PC-9 (cell line): ENCODE measurements at regions of chr16 and their contacts with region 1.

Region 1: GRCh38 chr16:20871941-20872815 is 28.0 kb downstream of the DCUN1D3 start:
- DNase-seq: no peak
- H3K4me3 ChIP-seq: no peak overlapping the region
- H3K27ac ChIP-seq: no peak overlapping the region
- H3K4me1 ChIP-seq: peaks cover 3% of the 10 kb centered on the region; the same call in 1 of the 2 replicates
- H3K27me3 ChIP-seq: no peaks in the 10 kb centered on the region
- CTCF ChIP-seq: no peak

Region 2: GRCh38 chr16:19389246-19389645 is 1482.9 kb before region 1 on chr16:
- CTCF ChIA-PET with region 1: no interaction called
- POLR2A ChIA-PET with region 1: no interaction called
- intact Hi-C with region 1: no loop called
- DNase-seq: peak in 1 of 2 experiments; percentile 48
- H3K4me3 ChIP-seq: no peak overlapping the region
- H3K27ac ChIP-seq: no peak overlapping the region
- H3K4me1 ChIP-seq: peaks cover 49% of the 10 kb centered on the region
- H3K27me3 ChIP-seq: no peaks in the 10 kb centered on the region
- CTCF ChIP-seq: peak; percentile 57

Region 3: DNA sequence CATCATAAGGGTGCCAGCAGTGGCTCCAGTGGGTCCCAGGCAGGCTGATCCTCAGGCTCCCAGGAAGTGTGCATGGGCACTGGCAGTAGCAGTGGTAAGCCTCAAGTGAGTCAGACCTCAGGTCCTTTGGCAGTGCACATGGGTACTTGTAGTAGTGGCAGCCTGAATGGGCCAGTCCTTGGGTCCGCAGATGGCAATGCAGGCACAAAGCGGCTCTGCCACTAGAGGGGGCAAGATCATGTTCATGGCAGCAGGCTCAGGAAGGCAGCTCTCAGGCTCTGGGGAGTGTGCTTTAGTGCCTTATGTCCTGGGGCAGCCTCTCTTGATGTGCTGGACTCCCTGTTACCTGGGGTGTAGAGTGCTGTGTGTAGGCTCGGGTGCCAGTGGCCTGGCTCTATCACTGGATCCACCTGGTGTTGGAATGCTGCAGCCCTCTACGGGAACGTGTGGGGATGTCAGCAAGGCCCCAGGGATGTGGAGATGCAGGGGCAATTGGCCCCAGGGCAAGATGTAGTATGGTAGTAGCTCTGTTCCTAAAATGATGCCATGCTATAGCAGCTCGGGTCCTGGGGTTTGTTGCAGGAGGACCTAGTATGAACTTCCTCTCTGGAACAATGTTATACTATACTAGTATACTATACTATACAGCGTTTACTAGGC is 97.3 kb before region 1 on chr16:
- CTCF ChIA-PET with region 1: no interaction called
- POLR2A ChIA-PET with region 1: interaction called, 15 read pairs
- intact Hi-C with region 1: no loop called
- DNase-seq: peak in 1 of 2 experiments; percentile 64
- H3K4me3 ChIP-seq: no peak overlapping the region
- H3K27ac ChIP-seq: no peak overlapping the region
- H3K4me1 ChIP-seq: no peaks in the 10 kb centered on the region
- H3K27me3 ChIP-seq: no peaks in the 10 kb centered on the region; the same call in 1 of the 2 replicates
- CTCF ChIP-seq: peak; percentile 74